ENCODE measurements at regions of chr14 and their contacts with region 1.

Region 1: DNA sequence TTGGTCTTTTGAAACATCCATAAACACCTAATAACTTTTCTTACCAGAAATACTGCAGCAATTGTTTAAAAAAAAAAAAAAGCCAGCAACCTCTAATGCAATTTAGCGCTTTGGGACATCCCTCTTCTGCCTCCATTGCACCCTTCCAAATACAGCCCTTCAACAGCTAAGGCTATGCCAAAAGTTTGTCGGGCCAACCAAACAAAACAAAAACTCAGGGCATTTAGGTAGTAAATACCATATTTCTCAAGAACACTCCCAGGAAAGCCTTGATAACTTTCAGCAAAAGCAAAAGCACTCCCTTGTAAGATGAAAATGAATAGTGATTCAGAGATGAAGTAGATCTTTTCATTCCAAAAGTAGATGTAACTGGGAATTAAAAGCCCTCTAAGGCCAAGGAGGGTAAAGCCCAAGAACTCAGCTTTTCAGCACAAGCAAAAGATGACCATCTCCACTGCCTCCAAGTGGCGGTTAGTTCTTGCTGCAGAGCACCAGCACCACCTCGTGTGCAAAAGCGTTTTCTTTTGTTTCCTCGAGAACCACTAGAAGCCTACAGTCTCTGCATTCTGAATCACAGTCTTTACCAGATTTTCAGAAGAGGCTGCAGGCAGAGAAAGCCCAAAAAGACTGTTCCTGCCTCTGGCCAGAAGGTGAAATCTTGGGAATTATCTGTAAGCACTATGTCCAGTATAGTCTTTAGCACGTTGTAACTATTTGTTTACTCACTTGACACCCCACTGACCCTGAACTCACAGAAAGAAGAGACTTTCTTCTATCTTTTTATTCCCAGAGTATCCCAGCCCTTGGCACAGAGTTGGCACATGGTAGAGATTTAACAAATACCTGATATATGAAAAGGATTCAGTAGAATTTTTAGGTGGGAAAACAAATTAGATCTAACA is 53.1 kb downstream of the SIX6 start:
- DNase-seq: peak; percentile 51 to 58
- H3K4me3 ChIP-seq: no peak overlapping the region
- H3K4me3 Mint-ChIP-seq: no peak overlapping the region
- H3K27ac Mint-ChIP-seq: no peak overlapping the region
- H3K4me1 ChIP-seq: no peaks in the 10 kb centered on the region
- H3K4me1 Mint-ChIP-seq: no peaks in the 10 kb centered on the region
- H3K27me3 ChIP-seq: no peaks in the 10 kb centered on the region
- H3K27me3 Mint-ChIP-seq: peaks cover 5% of the 10 kb centered on the region
- CTCF ChIP-seq: peak; percentile 73 to 76

Region 2: DNA sequence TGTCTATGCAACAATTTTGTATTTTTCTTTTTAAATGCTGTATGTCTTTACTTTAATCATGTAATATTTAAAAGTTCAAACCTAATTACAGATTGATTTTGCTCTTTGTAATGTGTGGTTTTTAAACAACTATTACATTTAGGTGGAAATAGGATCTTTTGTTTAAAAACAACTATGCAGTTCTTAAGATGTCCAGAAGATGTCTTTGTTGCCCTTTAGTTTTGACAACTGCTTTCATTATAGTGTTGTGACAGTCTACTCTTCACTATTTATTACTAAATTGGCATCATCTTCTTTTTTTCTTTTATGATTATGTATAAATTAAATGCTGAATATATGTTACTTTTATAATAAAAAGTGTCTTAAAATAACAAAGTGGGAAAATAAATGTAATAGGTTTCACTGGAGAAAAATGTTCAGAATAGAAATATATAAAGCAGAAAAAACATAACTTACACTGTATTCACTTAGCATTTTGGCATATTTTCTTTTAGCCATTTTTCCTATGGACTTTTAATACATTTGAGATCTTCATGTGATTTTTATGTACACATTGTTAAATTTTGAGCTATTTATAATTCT is 497.5 kb before region 1 on chr14:
- CTCF ChIA-PET with region 1: no interaction called
- POLR2A ChIA-PET with region 1: no interaction called
- intact Hi-C with region 1: loop called (anchors 5 kb)
- DNase-seq: no peak
- H3K4me3 ChIP-seq: no peak overlapping the region
- H3K4me3 Mint-ChIP-seq: no peak overlapping the region
- H3K27ac Mint-ChIP-seq: no peak overlapping the region
- H3K4me1 ChIP-seq: no peaks in the 10 kb centered on the region
- H3K4me1 Mint-ChIP-seq: no peaks in the 10 kb centered on the region
- H3K27me3 ChIP-seq: no peaks in the 10 kb centered on the region
- H3K27me3 Mint-ChIP-seq: no peaks in the 10 kb centered on the region
- CTCF ChIP-seq: peak; percentile 31 to 58

Region 3: DNA sequence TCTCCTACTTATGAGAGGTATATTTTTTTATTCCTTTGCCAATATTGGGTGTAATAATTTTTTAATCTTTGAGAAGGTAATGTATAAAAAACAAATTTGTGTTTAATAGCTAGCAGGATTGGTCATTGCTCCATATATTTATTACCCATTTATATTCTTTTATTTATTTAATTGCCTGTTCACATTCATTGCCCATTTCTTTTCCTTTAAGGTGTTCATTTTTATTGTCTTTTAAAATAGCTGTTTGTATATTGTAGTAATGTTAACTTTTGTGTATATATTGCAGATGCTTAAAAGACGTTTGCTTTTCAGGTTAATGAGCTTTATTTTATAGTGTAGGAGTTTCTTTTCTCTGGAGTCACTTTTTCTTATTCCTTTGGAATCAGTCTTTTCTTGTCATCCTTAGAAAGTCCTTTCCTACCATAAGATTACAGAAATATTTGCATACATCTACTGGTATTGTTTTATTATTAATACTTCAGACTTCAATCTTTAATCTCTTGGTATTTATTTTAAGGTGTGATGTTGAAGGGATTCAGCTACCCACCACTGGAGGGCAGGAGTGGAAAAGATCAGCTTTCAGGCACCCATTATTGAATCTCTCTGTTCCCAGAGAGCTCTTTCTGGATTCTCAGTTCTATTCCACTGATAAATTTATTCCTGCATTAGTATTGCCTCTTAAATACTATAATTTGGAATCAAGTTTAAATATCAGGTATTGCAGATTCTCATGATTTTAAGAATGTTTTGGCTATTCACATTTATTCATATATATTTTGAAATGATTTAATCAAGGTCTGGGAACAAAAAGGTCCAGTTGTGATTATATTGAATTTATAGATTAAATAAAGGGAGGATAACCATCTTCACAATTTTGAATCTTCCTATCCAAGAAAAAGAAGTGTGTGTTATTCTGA is 295.8 kb before region 1 on chr14:
- CTCF ChIA-PET with region 1: no interaction called
- POLR2A ChIA-PET with region 1: no interaction called
- intact Hi-C with region 1: loop called (anchors 1 kb)
- DNase-seq: peak in 1 of 2 experiments; percentile 54
- H3K4me3 ChIP-seq: no peak overlapping the region
- H3K4me3 Mint-ChIP-seq: no peak overlapping the region
- H3K27ac Mint-ChIP-seq: no peak overlapping the region
- H3K4me1 ChIP-seq: no peaks in the 10 kb centered on the region
- H3K4me1 Mint-ChIP-seq: peaks cover 7% of the 10 kb centered on the region
- H3K27me3 ChIP-seq: no peaks in the 10 kb centered on the region
- H3K27me3 Mint-ChIP-seq: no peaks in the 10 kb centered on the region
- CTCF ChIP-seq: peak; percentile 59 to 67

Region 4: GRCh38 chr14:60331201-60332045 is 230.7 kb before region 1 on chr14:
- CTCF ChIA-PET with region 1: interaction called, 6 read pairs
- POLR2A ChIA-PET with region 1: no interaction called
- intact Hi-C with region 1: loop called (anchors 1 kb)
- DNase-seq: peak; percentile 73 to 78
- H3K4me3 ChIP-seq: peak overlapping the region; percentile 43
- H3K4me3 Mint-ChIP-seq: peak overlapping the region; percentile 88
- H3K27ac Mint-ChIP-seq: peak overlapping the region; percentile 68
- H3K4me1 ChIP-seq: no peaks in the 10 kb centered on the region
- H3K4me1 Mint-ChIP-seq: no peaks in the 10 kb centered on the region
- H3K27me3 ChIP-seq: no peaks in the 10 kb centered on the region
- H3K27me3 Mint-ChIP-seq: peaks cover 7% of the 10 kb centered on the region
- CTCF ChIP-seq: peak; percentile 74 to 84

Region 5: DNA sequence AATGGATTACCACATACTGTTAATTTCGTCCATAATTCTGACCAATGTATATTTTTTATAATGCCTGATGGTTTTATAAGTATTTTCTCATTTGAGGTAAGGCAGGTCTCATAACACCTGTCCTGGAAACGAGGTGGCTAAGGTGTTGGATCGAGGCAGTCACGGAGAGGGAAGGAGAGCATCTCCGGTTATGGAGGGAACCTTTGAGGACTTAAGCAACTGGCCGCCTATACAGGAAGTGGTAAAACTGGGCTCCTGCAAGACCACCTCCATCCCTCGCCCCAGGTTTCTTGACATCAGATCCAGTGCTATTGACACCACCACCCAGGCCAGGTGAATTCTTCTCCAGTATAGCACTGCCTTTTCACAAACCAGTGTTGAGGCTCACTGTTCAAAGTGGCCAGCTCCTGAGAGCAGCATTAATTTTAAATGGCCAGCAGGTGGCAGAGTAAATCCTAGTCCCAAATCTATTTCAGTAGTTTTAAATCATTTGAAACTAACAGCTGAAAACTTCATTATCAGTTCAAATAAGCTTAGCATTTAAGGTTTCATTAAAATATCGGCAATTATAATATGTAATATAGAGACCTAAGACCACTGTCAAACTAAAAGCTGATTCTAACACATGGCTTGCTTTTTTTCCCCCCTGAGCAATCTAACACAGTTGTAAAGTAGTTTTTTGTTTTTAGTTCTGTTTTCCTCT is 212.3 kb before region 1 on chr14:
- CTCF ChIA-PET with region 1: interaction called, 9 read pairs
- POLR2A ChIA-PET with region 1: no interaction called
- intact Hi-C with region 1: loop called (anchors 1 kb)
- DNase-seq: peak in 1 of 2 experiments; percentile 33
- H3K4me3 ChIP-seq: no peak overlapping the region
- H3K4me3 Mint-ChIP-seq: no peak overlapping the region
- H3K27ac Mint-ChIP-seq: no peak overlapping the region
- H3K4me1 ChIP-seq: no peaks in the 10 kb centered on the region
- H3K4me1 Mint-ChIP-seq: no peaks in the 10 kb centered on the region
- H3K27me3 ChIP-seq: no peaks in the 10 kb centered on the region
- H3K27me3 Mint-ChIP-seq: peaks cover 8% of the 10 kb centered on the region
- CTCF ChIP-seq: peak; percentile 53 to 54

Region 6: GRCh38 chr14:60589442-60589841 is 27.3 kb after region 1 on chr14:
- CTCF ChIA-PET with region 1: no interaction called
- POLR2A ChIA-PET with region 1: no interaction called
- intact Hi-C with region 1: no loop called
- DNase-seq: no peak
- H3K4me3 ChIP-seq: no peak overlapping the region
- H3K4me3 Mint-ChIP-seq: no peak overlapping the region
- H3K27ac Mint-ChIP-seq: no peak overlapping the region
- H3K4me1 ChIP-seq: no peaks in the 10 kb centered on the region
- H3K4me1 Mint-ChIP-seq: no peaks in the 10 kb centered on the region
- H3K27me3 ChIP-seq: no peaks in the 10 kb centered on the region
- H3K27me3 Mint-ChIP-seq: peaks cover 3% of the 10 kb centered on the region
- CTCF ChIP-seq: no peak

Region 7: GRCh38 chr14:61252369-61253063 is 690.4 kb after region 1 on chr14:
- CTCF ChIA-PET with region 1: no interaction called
- POLR2A ChIA-PET with region 1: no interaction called
- intact Hi-C with region 1: loop called (anchors 2 kb)
- DNase-seq: peak; percentile 81
- H3K4me3 ChIP-seq: no peak overlapping the region
- H3K4me3 Mint-ChIP-seq: no peak overlapping the region
- H3K27ac Mint-ChIP-seq: no peak overlapping the region
- H3K4me1 ChIP-seq: 0 out of 2 replicates have a peak, but pooled peaks cover 4% of the 10 kb centered on the region
- H3K4me1 Mint-ChIP-seq: no peaks in the 10 kb centered on the region
- H3K27me3 ChIP-seq: no peaks in the 10 kb centered on the region
- H3K27me3 Mint-ChIP-seq: peaks cover 9% of the 10 kb centered on the region
- CTCF ChIP-seq: peak; percentile 72 to 91